GM12878 (cell line): ENCODE measurements at regions of chr3 and their contacts with region 1.

Region 1: GRCh38 chr3:187738331-187739093 is 6.8 kb downstream of the BCL6 start:
- DNase-seq: no peak
- ATAC-seq: peak; percentile 76
- H3K4me3 ChIP-seq: peak overlapping the region; percentile 50; the same call in 1 of the 2 replicates
- H3K27ac ChIP-seq: no peak overlapping the region
- H3K4me1 ChIP-seq: no peaks in the 10 kb centered on the region; the same call in 1 of the 2 replicates
- H3K27me3 ChIP-seq: peaks cover 12 to 19% of the 10 kb centered on the region in 2 experiments
- CTCF ChIP-seq: peak; percentile 77 to 84 (median 84)
- EP300 ChIP-seq: no peak
- POLR2A ChIP-seq: no peak
- RAD21 ChIP-seq: peak; percentile 88

Region 2: GRCh38 chr3:187714404-187714979 is 24.0 kb before region 1 on chr3:
- CTCF ChIA-PET with region 1: interaction called, 17 read pairs
- POLR2A ChIA-PET with region 1: no interaction called
- RAD21 ChIA-PET with region 1: no interaction called
- SMC1A ChIA-PET with region 1: no interaction called
- in situ Hi-C with region 1: no loop called
- intact Hi-C with region 1: no loop called
- DNase-seq: no peak
- ATAC-seq: peak; percentile 96
- H3K4me3 ChIP-seq: no peak overlapping the region
- H3K27ac ChIP-seq: no peak overlapping the region
- H3K4me1 ChIP-seq: no peaks in the 10 kb centered on the region
- H3K27me3 ChIP-seq: no peaks in the 10 kb centered on the region
- CTCF ChIP-seq: peak; percentile 87 to 92 (median 90); a peak in 5 of 6 replicates
- EP300 ChIP-seq: no peak
- POLR2A ChIP-seq: no peak
- RAD21 ChIP-seq: peak; percentile 96

Region 3: DNA sequence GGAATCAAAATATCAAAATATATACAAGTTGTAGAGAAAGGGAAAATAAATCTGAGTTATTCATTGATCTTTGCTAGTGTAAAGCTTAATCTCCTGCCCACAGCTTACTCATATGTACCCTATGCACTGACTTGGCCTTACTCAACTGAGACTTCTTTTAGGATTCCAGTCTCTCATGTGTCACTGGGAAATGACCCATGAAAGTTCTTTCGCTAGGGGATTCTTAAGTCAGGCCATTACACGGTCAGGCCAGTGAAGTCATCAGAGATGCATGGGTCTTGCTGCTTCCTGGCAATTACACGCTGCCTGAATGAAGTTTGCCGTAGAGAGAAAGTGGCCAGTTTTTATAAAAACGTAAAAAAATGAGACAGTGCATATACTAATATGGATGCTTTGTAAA is 394.7 kb after region 1 on chr3:
- CTCF ChIA-PET with region 1: interaction called, 11 read pairs
- POLR2A ChIA-PET with region 1: no interaction called
- RAD21 ChIA-PET with region 1: interaction called, 4 read pairs
- SMC1A ChIA-PET with region 1: no interaction called
- in situ Hi-C with region 1: no loop called
- intact Hi-C with region 1: loop called (anchors 5 kb)
- DNase-seq: no peak
- ATAC-seq: no peak
- H3K4me3 ChIP-seq: no peak overlapping the region
- H3K27ac ChIP-seq: no peak overlapping the region
- H3K4me1 ChIP-seq: no peaks in the 10 kb centered on the region
- H3K27me3 ChIP-seq: no peaks in the 10 kb centered on the region
- CTCF ChIP-seq: no peak
- EP300 ChIP-seq: no peak
- POLR2A ChIP-seq: no peak
- RAD21 ChIP-seq: no peak

Region 4: GRCh38 chr3:188279502-188280335 is 541.2 kb after region 1 on chr3:
- CTCF ChIA-PET with region 1: interaction called, 14 read pairs
- POLR2A ChIA-PET with region 1: no interaction called
- RAD21 ChIA-PET with region 1: interaction called, 3 read pairs
- SMC1A ChIA-PET with region 1: interaction called, 5 read pairs
- in situ Hi-C with region 1: no loop called
- intact Hi-C with region 1: no loop called
- DNase-seq: no peak
- ATAC-seq: no peak
- H3K4me3 ChIP-seq: no peak overlapping the region
- H3K27ac ChIP-seq: no peak overlapping the region
- H3K4me1 ChIP-seq: no peaks in the 10 kb centered on the region
- H3K27me3 ChIP-seq: no peaks in the 10 kb centered on the region; a peak in 1 of 4 replicates
- CTCF ChIP-seq: no peak; a peak in 1 of 6 replicates
- EP300 ChIP-seq: no peak
- POLR2A ChIP-seq: no peak
- RAD21 ChIP-seq: no peak

Region 5: GRCh38 chr3:188573291-188573940 is 834.9 kb after region 1 on chr3:
- CTCF ChIA-PET with region 1: interaction called, 7 read pairs
- POLR2A ChIA-PET with region 1: interaction called, 5 read pairs
- RAD21 ChIA-PET with region 1: interaction called, 3 read pairs
- SMC1A ChIA-PET with region 1: interaction called, 6 read pairs
- in situ Hi-C with region 1: no loop called
- intact Hi-C with region 1: loop called (anchors 1 kb)
- DNase-seq: no peak
- ATAC-seq: no peak
- H3K4me3 ChIP-seq: no peak overlapping the region
- H3K27ac ChIP-seq: no peak overlapping the region
- H3K4me1 ChIP-seq: no peaks in the 10 kb centered on the region
- H3K27me3 ChIP-seq: peaks cover 0 to 2% of the 10 kb centered on the region in 2 experiments; a peak in 1 of 4 replicates
- CTCF ChIP-seq: peak in 1 of 3 experiments; percentile 12; a peak in 1 of 6 replicates
- EP300 ChIP-seq: no peak
- POLR2A ChIP-seq: no peak
- RAD21 ChIP-seq: peak; percentile 30

Region 6: GRCh38 chr3:188819939-188820338 is 1081.4 kb after region 1 on chr3:
- CTCF ChIA-PET with region 1: interaction called, 3 read pairs
- POLR2A ChIA-PET with region 1: no interaction called
- RAD21 ChIA-PET with region 1: no interaction called
- SMC1A ChIA-PET with region 1: no interaction called
- in situ Hi-C with region 1: no loop called
- intact Hi-C with region 1: loop called (anchors 10 kb)
- DNase-seq: no peak
- ATAC-seq: no peak
- H3K4me3 ChIP-seq: no peak overlapping the region
- H3K27ac ChIP-seq: no peak overlapping the region
- H3K4me1 ChIP-seq: no peaks in the 10 kb centered on the region
- H3K27me3 ChIP-seq: no peaks in the 10 kb centered on the region
- CTCF ChIP-seq: no peak
- EP300 ChIP-seq: no peak
- POLR2A ChIP-seq: no peak
- RAD21 ChIP-seq: no peak

Region 7: GRCh38 chr3:189049438-189050236 is 1311.1 kb after region 1 on chr3:
- CTCF ChIA-PET with region 1: interaction called, 23 read pairs
- POLR2A ChIA-PET with region 1: no interaction called
- RAD21 ChIA-PET with region 1: no interaction called
- SMC1A ChIA-PET with region 1: no interaction called
- in situ Hi-C with region 1: loop called (anchors 5 kb)
- intact Hi-C with region 1: no loop called
- DNase-seq: no peak
- ATAC-seq: no peak
- H3K4me3 ChIP-seq: no peak overlapping the region
- H3K27ac ChIP-seq: no peak overlapping the region
- H3K4me1 ChIP-seq: no peaks in the 10 kb centered on the region
- H3K27me3 ChIP-seq: no peaks in the 10 kb centered on the region; a peak in 1 of 4 replicates
- CTCF ChIP-seq: 0 out of 6 replicates have a peak, but pooled peaks of 2 of the 3 experiments have one; percentile 13 to 21
- EP300 ChIP-seq: no peak
- POLR2A ChIP-seq: no peak
- RAD21 ChIP-seq: no peak